Sigmoid colon (tissue), 7 donors: ENCODE measurements at regions of chr11 and their contacts with region 1.

Region 1: DNA sequence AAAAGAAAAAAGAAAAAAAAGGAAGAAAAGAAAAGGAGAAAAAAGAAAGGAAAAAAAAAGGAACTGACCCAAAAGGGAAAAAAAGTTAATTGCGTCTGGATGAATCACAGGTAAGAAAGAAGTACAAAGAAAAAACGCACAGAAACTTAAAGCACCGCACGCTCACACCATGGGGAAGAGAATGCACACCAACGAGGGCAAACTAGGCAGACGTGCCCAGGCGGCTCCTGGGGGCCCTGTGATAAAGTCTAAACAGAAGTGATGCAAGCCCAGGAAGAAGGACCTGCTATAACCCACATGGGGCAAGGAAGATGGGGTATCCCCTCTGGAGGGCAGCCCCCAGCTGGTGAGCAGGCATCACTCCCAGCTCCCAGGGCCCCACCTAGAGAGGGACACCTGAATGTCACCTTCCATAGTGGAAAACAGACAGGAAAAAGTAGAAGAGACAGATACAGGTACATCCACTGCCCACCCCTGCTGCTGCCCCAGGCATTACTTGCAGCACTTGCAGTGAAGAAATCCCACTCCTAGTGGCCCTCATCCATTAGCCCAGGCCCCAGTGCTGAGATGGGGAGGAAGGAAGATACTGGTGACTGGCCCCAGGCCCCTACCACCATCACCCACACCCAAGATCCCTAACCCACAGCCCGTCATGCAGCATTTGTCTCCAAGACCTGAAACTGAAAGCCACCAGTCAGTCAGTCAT is 28.9 kb downstream of the NAP1L4 start:
- DNase-seq: no peak
- H3K4me3 ChIP-seq: no peak overlapping the region
- H3K27ac ChIP-seq: no peak overlapping the region
- H3K4me1 ChIP-seq: no peaks in the 10 kb centered on the region
- H3K27me3 ChIP-seq: no peaks in the 10 kb centered on the region
- CTCF ChIP-seq: no peak
- EP300 ChIP-seq: no peak
- POLR2A ChIP-seq: no peak

Region 2: DNA sequence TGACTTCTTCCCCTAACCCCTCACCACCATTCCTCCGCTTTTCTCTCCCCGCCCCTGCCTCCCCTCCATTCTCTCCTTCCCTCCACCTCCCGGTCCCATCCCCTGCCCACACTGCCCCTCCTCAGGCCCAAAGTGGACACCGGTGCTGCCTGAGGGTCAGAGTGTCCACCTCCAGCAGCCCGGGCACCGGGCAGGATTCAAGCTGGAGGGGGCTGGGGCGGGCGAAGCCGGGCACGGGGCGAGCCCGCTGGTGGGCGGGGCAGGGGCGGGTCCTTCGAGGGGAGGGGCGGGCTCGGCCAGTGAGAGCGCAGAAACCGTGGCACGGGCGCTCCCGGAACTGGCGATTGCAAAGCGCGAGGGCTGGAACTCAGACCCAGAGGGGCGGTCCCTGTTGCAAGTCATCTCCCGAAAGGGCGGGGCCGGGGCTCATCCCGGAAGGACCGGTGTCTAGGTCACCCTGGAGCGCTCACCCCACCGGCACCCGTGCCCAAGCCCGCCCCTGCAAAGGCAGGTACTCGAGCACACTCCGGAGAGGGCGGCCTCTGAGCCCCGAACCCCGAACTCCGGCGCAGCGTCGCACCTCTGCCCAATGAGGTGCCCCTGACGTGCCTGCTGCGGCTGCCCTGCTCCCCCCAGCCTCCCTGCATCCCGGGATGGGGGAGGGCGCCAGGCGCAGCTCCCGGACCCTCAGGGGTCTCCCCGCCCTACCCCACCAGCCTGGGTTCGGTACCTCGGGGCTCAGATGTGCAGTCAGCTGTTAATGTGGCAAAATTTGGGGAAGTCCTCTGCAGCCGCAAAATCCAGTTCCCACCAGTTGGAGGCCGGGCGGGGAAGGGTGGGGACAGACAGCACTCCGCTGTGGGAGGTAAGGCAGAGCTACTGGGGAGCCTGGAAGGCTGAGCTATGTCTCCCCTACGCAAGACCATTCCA is 61.1 kb before region 1 on chr11:
- intact Hi-C with region 1: no loop called
- DNase-seq: peak; percentile 99
- H3K4me3 ChIP-seq: peak overlapping the region; percentile 47 to 87 (median 67)
- H3K27ac ChIP-seq: peak overlapping the region; percentile 75 to 81 (median 78)
- H3K4me1 ChIP-seq: peaks cover 0 to 26% (median 16%) of the 10 kb centered on the region in 4 donors
- H3K27me3 ChIP-seq: peaks cover 0 to 4% (median 0%) of the 10 kb centered on the region in 3 donors
- CTCF ChIP-seq: no peak
- EP300 ChIP-seq: peak in 1 of 4 donors; percentile 28
- POLR2A ChIP-seq: peak; percentile 32 to 69

Region 3: GRCh38 chr11:2975594-2975993 is 12.3 kb after region 1 on chr11:
- intact Hi-C with region 1: loop called (anchors 1 kb)
- DNase-seq: no peak
- H3K4me3 ChIP-seq: no peak overlapping the region
- H3K27ac ChIP-seq: no peak overlapping the region
- H3K4me1 ChIP-seq: peaks cover 0 to 6% (median 0%) of the 10 kb centered on the region in 4 donors
- H3K27me3 ChIP-seq: no peaks in the 10 kb centered on the region
- CTCF ChIP-seq: no peak
- EP300 ChIP-seq: no peak
- POLR2A ChIP-seq: no peak